CD4-positive, alpha-beta T cell (primary cell): ENCODE measurements at regions of chr11 and their contacts with region 1.

Region 1: GRCh38 chr11:117143871-117144476 is at the start of gene PAFAH1B2:
- DNase-seq: peak; percentile 88 to 98 (median 94)
- ATAC-seq: peak; percentile 88
- H3K4me3 ChIP-seq: peak within 1 kb of the TSS; percentile 96
- H3K4me3 Mint-ChIP-seq: peak within 1 kb of the TSS; percentile 98
- H3K27ac ChIP-seq: peak within 1 kb of the TSS; percentile 61 to 74
- H3K27ac Mint-ChIP-seq: peak within 1 kb of the TSS; percentile 95
- H3K4me1 ChIP-seq: peaks cover 41% of the 10 kb centered on the region
- H3K4me1 Mint-ChIP-seq: peaks cover 45% of the 10 kb centered on the region
- H3K27me3 ChIP-seq: no peaks in the 10 kb centered on the region
- H3K27me3 Mint-ChIP-seq: no peaks in the 10 kb centered on the region
- CTCF ChIP-seq: no peak
- total RNA-seq, gene PAFAH1B2: 44.3 to 45.6 TPM

Region 2: DNA sequence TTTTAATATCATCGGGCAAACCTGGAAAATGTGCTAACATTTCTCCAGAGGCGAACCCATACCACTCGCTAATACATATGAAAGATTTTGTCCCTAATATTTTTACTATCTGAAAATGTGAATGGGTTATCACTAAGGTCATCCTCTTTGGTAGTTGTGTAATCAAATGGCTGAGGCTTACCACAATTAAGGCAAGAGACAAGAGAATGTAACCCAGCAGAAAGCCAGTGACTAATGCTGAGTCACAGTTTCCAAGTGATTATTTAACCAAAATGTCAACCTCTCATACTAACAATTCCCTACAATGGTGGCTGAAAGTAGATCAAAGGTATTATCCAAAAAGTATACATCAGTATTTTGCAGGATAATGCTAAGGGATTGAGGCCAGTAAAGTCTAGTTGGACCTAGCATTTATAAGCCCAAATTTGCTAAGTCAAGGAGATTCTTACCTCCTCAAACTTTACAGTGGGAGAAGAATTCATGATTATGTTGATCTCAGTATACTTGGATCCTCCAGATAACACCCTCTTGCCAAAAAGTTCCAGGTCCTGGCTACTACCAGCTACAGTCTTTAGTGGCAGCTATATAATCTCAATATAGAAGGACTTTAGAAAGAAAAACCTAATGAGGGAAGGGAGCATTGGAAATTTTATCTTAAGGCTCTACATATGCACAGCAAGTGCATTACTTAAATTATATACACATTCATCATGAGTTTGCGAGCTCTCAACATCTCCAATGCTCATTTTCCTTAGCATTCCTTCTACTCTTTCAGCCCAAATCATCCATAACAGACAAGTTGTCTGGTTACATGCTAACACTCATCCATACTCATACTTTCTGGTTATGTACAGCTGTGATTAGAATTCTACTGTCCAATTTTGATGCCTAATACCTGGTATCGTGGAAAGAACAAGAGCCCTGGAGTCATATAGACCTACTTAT is 71.2 kb before region 1 on chr11:
- CTCF ChIA-PET with region 1: no interaction called
- POLR2A ChIA-PET with region 1: no interaction called
- intact Hi-C with region 1: no loop called
- DNase-seq: peak in 4 of 14 experiments; percentile 23 to 63 (median 52)
- ATAC-seq: peak; percentile 39
- H3K4me3 ChIP-seq: no peak overlapping the region
- H3K4me3 Mint-ChIP-seq: no peak overlapping the region
- H3K27ac ChIP-seq: no peak overlapping the region
- H3K27ac Mint-ChIP-seq: no peak overlapping the region
- H3K4me1 ChIP-seq: peaks cover 30% of the 10 kb centered on the region
- H3K4me1 Mint-ChIP-seq: peaks cover 66% of the 10 kb centered on the region
- H3K27me3 ChIP-seq: no peaks in the 10 kb centered on the region
- H3K27me3 Mint-ChIP-seq: no peaks in the 10 kb centered on the region
- CTCF ChIP-seq: no peak

Region 3: GRCh38 chr11:117171404-117172061 is 27.6 kb after region 1 on chr11:
- CTCF ChIA-PET with region 1: interaction called, 3 read pairs
- POLR2A ChIA-PET with region 1: interaction called, 16 read pairs
- intact Hi-C with region 1: loop called in 1 of 2 experiments (anchors 5 kb)
- DNase-seq: no peak
- ATAC-seq: no peak
- H3K4me3 ChIP-seq: no peak overlapping the region
- H3K4me3 Mint-ChIP-seq: no peak overlapping the region
- H3K27ac ChIP-seq: no peak overlapping the region
- H3K27ac Mint-ChIP-seq: peak overlapping the region; percentile 47
- H3K4me1 ChIP-seq: no peaks in the 10 kb centered on the region
- H3K4me1 Mint-ChIP-seq: peaks cover 10% of the 10 kb centered on the region
- H3K27me3 ChIP-seq: no peaks in the 10 kb centered on the region
- H3K27me3 Mint-ChIP-seq: no peaks in the 10 kb centered on the region
- CTCF ChIP-seq: no peak

Region 4: GRCh38 chr11:117178210-117179034 is 34.4 kb after region 1 on chr11 and contains the start of gene SIDT2:
- CTCF ChIA-PET with region 1: interaction called, 3 read pairs
- POLR2A ChIA-PET with region 1: interaction called, 60 read pairs
- intact Hi-C with region 1: loop called (anchors 1 to 5 kb)
- DNase-seq: peak; percentile 77 to 94 (median 86)
- ATAC-seq: peak; percentile 89
- H3K4me3 ChIP-seq: peak within 1 kb of the TSS; percentile 81
- H3K4me3 Mint-ChIP-seq: peak within 1 kb of the TSS; percentile 99
- H3K27ac ChIP-seq: peak within 1 kb of the TSS; percentile 34 to 52
- H3K27ac Mint-ChIP-seq: peak within 1 kb of the TSS; percentile 98
- H3K4me1 ChIP-seq: peaks cover 32% of the 10 kb centered on the region
- H3K4me1 Mint-ChIP-seq: peaks cover 40% of the 10 kb centered on the region
- H3K27me3 ChIP-seq: no peaks in the 10 kb centered on the region
- H3K27me3 Mint-ChIP-seq: no peaks in the 10 kb centered on the region
- CTCF ChIP-seq: no peak
- total RNA-seq, gene SIDT2: 197 to 200 TPM

Region 5: DNA sequence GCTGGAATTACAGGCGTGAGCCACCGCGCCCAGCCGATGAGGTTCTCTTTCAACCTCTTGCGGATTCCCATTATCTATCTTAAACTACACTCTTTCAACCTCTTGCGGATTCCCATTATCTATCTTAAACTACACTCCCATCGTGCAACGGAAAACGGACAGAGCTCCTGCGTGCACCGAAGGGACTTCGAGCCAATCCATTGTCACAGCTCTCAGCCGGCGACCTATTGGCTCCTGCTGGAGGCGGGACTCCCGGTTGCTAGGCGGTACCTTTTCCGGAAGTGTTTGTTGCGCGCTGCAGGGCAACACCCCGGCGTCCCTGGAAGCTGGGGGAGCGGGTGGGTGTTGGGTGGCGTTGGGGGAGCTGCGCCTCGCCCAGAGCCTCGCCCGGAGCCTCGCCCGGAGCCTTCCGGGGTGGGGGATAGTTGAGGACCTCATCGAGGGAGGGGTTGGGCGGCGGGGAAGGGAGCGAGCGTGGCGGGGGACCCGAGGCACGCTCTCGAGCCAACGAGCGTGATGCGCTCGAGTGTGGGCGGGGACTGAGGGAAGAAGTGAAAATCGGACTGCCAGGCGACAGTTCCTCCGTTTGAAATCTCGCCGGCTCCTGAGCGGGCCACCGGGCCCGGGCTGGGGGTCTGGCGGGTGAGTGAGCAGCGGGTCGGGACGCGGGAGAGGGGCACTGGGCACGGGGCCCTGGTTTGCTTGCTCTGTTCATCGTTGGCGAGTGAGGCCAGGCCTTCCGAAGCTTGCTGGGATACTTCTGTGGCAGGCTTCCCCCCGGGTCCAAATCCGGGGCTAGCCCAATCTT is 183.8 kb after region 1 on chr11 and contains the start of gene CEP164:
- CTCF ChIA-PET with region 1: interaction called, 3 read pairs
- POLR2A ChIA-PET with region 1: interaction called, 6 read pairs
- intact Hi-C with region 1: loop called in 1 of 2 experiments (anchors 10 kb)
- DNase-seq: peak; percentile 89 to 97 (median 92)
- ATAC-seq: peak; percentile 93
- H3K4me3 ChIP-seq: peak within 1 kb of the TSS; percentile 92
- H3K4me3 Mint-ChIP-seq: peak within 1 kb of the TSS; percentile 69
- H3K27ac ChIP-seq: peak within 1 kb of the TSS; percentile 68 to 92
- H3K27ac Mint-ChIP-seq: peak within 1 kb of the TSS; percentile 59
- H3K4me1 ChIP-seq: peaks cover 23% of the 10 kb centered on the region
- H3K4me1 Mint-ChIP-seq: peaks cover 9% of the 10 kb centered on the region
- H3K27me3 ChIP-seq: no peaks in the 10 kb centered on the region
- H3K27me3 Mint-ChIP-seq: no peaks in the 10 kb centered on the region
- CTCF ChIP-seq: no peak
- total RNA-seq, gene CEP164: 33.0 to 36.7 TPM